ENCODE measurements at regions of chr10 and their contacts with region 1.

Region 1: GRCh38 chr10:102394079-102394800 is 1.3 kb upstream of the NFKB2 start:
- DNase-seq: peak; percentile 96 to 100 (median 99)
- ATAC-seq: peak; percentile 83
- H3K4me3 ChIP-seq: peak overlapping the region; percentile 78
- H3K4me3 Mint-ChIP-seq: peak overlapping the region; percentile 92 to 99 (median 96)
- H3K27ac ChIP-seq: peak overlapping the region; percentile 100
- H3K27ac Mint-ChIP-seq: peak overlapping the region; percentile 94 to 100 (median 100)
- H3K4me1 ChIP-seq: peaks cover 16 to 24% of the 10 kb centered on the region in 2 donors
- H3K4me1 Mint-ChIP-seq: peaks cover 20 to 45% (median 39%) of the 10 kb centered on the region in 7 donors
- H3K27me3 ChIP-seq: no peaks in the 10 kb centered on the region
- H3K27me3 Mint-ChIP-seq: peaks cover 0 to 4% (median 0%) of the 10 kb centered on the region in 5 donors

Region 2: DNA sequence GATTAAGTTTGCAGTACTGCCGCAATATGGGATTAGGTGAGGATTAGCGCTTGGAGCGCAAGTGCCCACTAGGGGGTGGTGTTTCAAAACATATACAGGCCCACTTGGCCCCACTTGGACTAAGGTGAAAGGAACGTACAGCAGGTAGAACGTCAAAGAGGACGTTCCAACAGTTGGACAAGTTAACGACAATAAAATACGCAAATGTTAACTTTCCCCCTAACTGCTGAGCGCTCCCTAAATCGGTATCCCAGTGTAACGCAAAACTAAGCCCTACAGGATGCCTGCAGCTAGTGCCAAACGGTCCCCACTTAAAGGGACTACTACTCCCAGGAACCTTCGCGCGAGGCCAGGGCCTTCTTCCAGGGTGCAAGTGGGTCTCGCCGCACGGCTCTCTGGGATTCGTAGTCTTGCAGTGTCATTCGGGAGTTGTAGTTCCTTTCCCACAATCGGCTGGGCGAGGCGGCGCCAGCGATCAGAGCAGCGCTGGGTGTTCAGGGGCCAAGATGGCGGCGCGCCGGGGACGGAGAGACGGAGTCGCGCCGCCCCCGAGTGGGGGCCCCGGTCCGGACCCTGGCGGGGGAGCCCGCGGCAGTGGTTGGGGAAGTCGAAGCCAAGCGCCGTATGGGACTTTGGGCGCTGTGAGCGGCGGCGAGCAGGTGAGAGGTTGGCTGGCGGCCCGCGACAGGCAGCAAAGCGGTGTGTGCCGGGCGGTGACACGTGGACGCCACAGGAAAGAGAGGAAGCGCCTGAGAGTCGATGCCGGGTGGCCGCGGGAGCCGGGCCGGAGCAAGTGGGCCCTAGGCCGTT is 261.5 kb before region 1 on chr10 and contains the start of gene PPRC1:
- CTCF ChIA-PET with region 1: interaction called, 3 read pairs
- POLR2A ChIA-PET with region 1: no interaction called
- intact Hi-C with region 1: loop called (anchors 1 kb)
- DNase-seq: peak; percentile 88 to 98 (median 97)
- ATAC-seq: peak; percentile 97
- H3K4me3 ChIP-seq: peak within 1 kb of the TSS; percentile 80
- H3K4me3 Mint-ChIP-seq: peak within 1 kb of the TSS; percentile 90 to 99 (median 98)
- H3K27ac ChIP-seq: peak within 1 kb of the TSS; percentile 89
- H3K27ac Mint-ChIP-seq: peak within 1 kb of the TSS; percentile 89 to 99 (median 96)
- H3K4me1 ChIP-seq: peaks cover 15 to 26% of the 10 kb centered on the region in 2 donors
- H3K4me1 Mint-ChIP-seq: peaks cover 29 to 53% (median 47%) of the 10 kb centered on the region in 7 donors
- H3K27me3 ChIP-seq: no peaks in the 10 kb centered on the region
- H3K27me3 Mint-ChIP-seq: no peaks in the 10 kb centered on the region
- total RNA-seq, gene PPRC1: 33.7 to 56.5 (median 40.6) TPM

Region 3: GRCh38 chr10:102245101-102245931 is 148.9 kb before region 1 on chr10 and contains the start of gene GBF1:
- CTCF ChIA-PET with region 1: no interaction called
- POLR2A ChIA-PET with region 1: no interaction called
- intact Hi-C with region 1: loop called (anchors 1 kb)
- DNase-seq: peak; percentile 69 to 97 (median 96)
- ATAC-seq: peak; percentile 92
- H3K4me3 ChIP-seq: peak within 1 kb of the TSS; percentile 84
- H3K4me3 Mint-ChIP-seq: peak within 1 kb of the TSS; percentile 83 to 100 (median 97)
- H3K27ac ChIP-seq: peak within 1 kb of the TSS; percentile 90
- H3K27ac Mint-ChIP-seq: peak within 1 kb of the TSS; percentile 65 to 98 (median 95)
- H3K4me1 ChIP-seq: peaks cover 17 to 37% of the 10 kb centered on the region in 2 donors
- H3K4me1 Mint-ChIP-seq: peaks cover 43 to 69% (median 54%) of the 10 kb centered on the region in 7 donors
- H3K27me3 ChIP-seq: peaks cover 0 to 16% of the 10 kb centered on the region in 2 donors
- H3K27me3 Mint-ChIP-seq: peaks cover 14 to 27% (median 22%) of the 10 kb centered on the region in 5 donors
- total RNA-seq, gene GBF1: 36.2 to 47.2 (median 37.8) TPM

Region 4: DNA sequence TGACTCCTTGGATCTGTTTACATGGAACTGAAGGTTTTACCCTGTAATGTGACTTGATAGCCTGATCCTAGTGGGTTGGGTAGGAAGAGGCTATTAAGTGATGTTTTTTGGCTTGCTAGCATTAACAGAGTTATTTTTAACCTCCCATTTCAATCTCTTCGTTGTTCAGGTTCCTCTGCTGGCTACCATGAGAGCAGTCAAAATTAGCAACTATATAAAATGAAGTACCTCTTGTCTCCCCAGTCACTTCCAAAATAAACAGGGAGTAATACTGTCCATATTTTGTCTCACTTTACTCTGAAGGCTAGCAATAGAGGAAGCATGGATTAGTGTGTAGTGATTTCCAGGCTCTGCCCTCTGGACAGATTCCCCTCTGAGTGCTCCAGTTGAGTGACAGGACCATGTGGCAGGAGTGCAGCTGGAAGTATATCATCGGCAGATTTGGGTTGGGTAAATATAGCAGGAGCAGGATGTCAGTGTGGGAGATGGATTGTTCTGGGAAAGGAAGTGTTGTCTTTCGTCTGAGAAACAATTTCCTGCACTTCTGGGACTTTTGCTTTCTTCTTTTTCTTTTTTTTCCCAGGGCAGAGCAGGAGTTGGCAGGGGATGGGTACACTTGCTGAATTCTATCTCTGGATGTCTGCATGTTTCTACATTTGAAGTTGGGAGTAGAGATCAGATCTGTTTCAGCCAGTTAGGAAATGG is 113.7 kb before region 1 on chr10:
- CTCF ChIA-PET with region 1: no interaction called
- POLR2A ChIA-PET with region 1: no interaction called
- intact Hi-C with region 1: no loop called
- DNase-seq: no peak
- ATAC-seq: no peak
- H3K4me3 ChIP-seq: no peak overlapping the region
- H3K4me3 Mint-ChIP-seq: peak overlapping the region in 8 of 10 donors; percentile 17 to 82 (median 47)
- H3K27ac ChIP-seq: peak overlapping the region; percentile 3
- H3K27ac Mint-ChIP-seq: peak overlapping the region in 7 of 9 donors; percentile 19 to 80 (median 62)
- H3K4me1 ChIP-seq: peaks cover 5 to 37% of the 10 kb centered on the region in 2 donors
- H3K4me1 Mint-ChIP-seq: peaks cover 32 to 71% (median 61%) of the 10 kb centered on the region in 7 donors
- H3K27me3 ChIP-seq: no peaks in the 10 kb centered on the region
- H3K27me3 Mint-ChIP-seq: no peaks in the 10 kb centered on the region

Region 5: GRCh38 chr10:102450194-102450938 is 56.1 kb after region 1 on chr10:
- CTCF ChIA-PET with region 1: interaction called, 8 read pairs
- POLR2A ChIA-PET with region 1: interaction called, 64 read pairs
- intact Hi-C with region 1: loop called (anchors 1 kb)
- DNase-seq: peak; percentile 85 to 95 (median 92)
- ATAC-seq: peak; percentile 90
- H3K4me3 ChIP-seq: peak overlapping the region; percentile 88
- H3K4me3 Mint-ChIP-seq: peak overlapping the region; percentile 89 to 97 (median 94)
- H3K27ac ChIP-seq: peak overlapping the region; percentile 90
- H3K27ac Mint-ChIP-seq: peak overlapping the region; percentile 81 to 97 (median 95)
- H3K4me1 ChIP-seq: peaks cover 12 to 14% of the 10 kb centered on the region in 2 donors
- H3K4me1 Mint-ChIP-seq: peaks cover 14 to 37% (median 27%) of the 10 kb centered on the region in 7 donors
- H3K27me3 ChIP-seq: no peaks in the 10 kb centered on the region
- H3K27me3 Mint-ChIP-seq: no peaks in the 10 kb centered on the region

Region 6: GRCh38 chr10:102511583-102512274 is 117.5 kb after region 1 on chr10:
- CTCF ChIA-PET with region 1: no interaction called
- POLR2A ChIA-PET with region 1: no interaction called
- intact Hi-C with region 1: no loop called
- DNase-seq: no peak
- ATAC-seq: peak; percentile 63
- H3K4me3 ChIP-seq: no peak overlapping the region
- H3K4me3 Mint-ChIP-seq: no peak overlapping the region
- H3K27ac ChIP-seq: no peak overlapping the region
- H3K27ac Mint-ChIP-seq: peak overlapping the region in 8 of 9 donors; percentile 3 to 86 (median 60)
- H3K4me1 ChIP-seq: peaks cover 0 to 8% of the 10 kb centered on the region in 2 donors
- H3K4me1 Mint-ChIP-seq: peaks cover 12 to 35% (median 28%) of the 10 kb centered on the region in 7 donors
- H3K27me3 ChIP-seq: no peaks in the 10 kb centered on the region
- H3K27me3 Mint-ChIP-seq: no peaks in the 10 kb centered on the region

Region 7: GRCh38 chr10:102615361-102615760 is 221.1 kb after region 1 on chr10:
- CTCF ChIA-PET with region 1: no interaction called
- POLR2A ChIA-PET with region 1: no interaction called
- intact Hi-C with region 1: loop called in 1 of 2 experiments (anchors 1 kb)
- DNase-seq: no peak
- ATAC-seq: no peak
- H3K4me3 ChIP-seq: no peak overlapping the region
- H3K4me3 Mint-ChIP-seq: no peak overlapping the region
- H3K27ac ChIP-seq: no peak overlapping the region
- H3K27ac Mint-ChIP-seq: peak overlapping the region in 6 of 9 donors; percentile 29 to 84 (median 53)
- H3K4me1 ChIP-seq: peaks cover 0 to 35% of the 10 kb centered on the region in 2 donors
- H3K4me1 Mint-ChIP-seq: peaks cover 7 to 36% (median 32%) of the 10 kb centered on the region in 7 donors
- H3K27me3 ChIP-seq: no peaks in the 10 kb centered on the region
- H3K27me3 Mint-ChIP-seq: no peaks in the 10 kb centered on the region

Region 8: DNA sequence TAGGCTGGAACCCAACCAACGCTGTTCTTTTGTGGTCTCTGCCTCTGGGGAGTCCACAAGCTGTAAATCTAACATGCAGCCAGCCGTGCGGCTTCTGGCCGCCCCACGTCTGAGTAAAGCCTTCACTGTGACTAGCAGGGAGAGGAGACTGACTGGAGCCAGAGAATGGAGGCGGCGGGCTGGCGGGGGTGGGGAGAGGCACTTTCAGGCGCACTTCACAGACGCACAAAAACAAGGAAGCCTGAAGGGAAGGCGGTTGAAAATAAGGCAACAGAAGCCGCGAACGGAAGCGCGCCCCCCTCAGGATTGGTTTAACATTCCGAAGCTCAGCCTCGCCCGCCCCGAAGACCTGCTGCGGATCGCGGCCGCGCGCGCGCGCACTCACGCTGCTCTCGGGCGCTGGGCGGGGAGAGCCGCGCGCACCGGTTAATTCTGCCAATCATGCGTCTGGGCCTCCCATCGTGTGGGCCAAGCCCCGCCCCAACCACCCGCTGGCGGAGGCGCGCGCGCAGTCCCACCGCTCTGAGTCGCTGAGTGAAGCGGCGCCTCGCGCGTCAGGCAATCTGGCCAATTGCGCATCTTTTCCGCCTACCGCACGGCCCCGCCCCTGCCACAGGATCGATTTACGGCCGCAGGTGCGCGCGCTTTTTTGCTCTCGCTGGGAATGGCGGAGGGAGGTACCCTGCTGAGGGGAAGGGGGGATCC is 1727.4 kb after region 1 on chr10 and contains the start of gene SFR1:
- CTCF ChIA-PET with region 1: no interaction called
- POLR2A ChIA-PET with region 1: no interaction called
- intact Hi-C with region 1: loop called in 1 of 2 experiments (anchors 10 kb)
- DNase-seq: peak; percentile 95 to 100 (median 99)
- ATAC-seq: peak; percentile 93
- H3K4me3 ChIP-seq: peak within 1 kb of the TSS; percentile 88
- H3K4me3 Mint-ChIP-seq: peak within 1 kb of the TSS; percentile 88 to 97 (median 96)
- H3K27ac ChIP-seq: peak within 1 kb of the TSS; percentile 99
- H3K27ac Mint-ChIP-seq: peak within 1 kb of the TSS; percentile 95 to 100 (median 99)
- H3K4me1 ChIP-seq: peaks cover 13 to 18% of the 10 kb centered on the region in 2 donors
- H3K4me1 Mint-ChIP-seq: peaks cover 9 to 42% (median 32%) of the 10 kb centered on the region in 7 donors
- H3K27me3 ChIP-seq: no peaks in the 10 kb centered on the region
- H3K27me3 Mint-ChIP-seq: peaks cover 0 to 12% (median 0%) of the 10 kb centered on the region in 5 donors
- total RNA-seq, gene SFR1: 12.0 to 15.3 (median 14.2) TPM

Measured in naive thymus-derived CD4-positive, alpha-beta T cell (primary cell).